Heart left ventricle (tissue), 16 donors: ENCODE measurements at regions of chrX and their contacts with region 1.

Region 1: GRCh38 chrX:101287402-101287801 is 3.7 kb downstream of the TAF7L start:
- DNase-seq: no peak
- ATAC-seq: no peak
- H3K4me3 ChIP-seq: no peak overlapping the region
- H3K27ac ChIP-seq: no peak overlapping the region
- H3K4me1 ChIP-seq: no peaks in the 10 kb centered on the region
- H3K27me3 ChIP-seq: peaks cover 0 to 24% (median 7%) of the 10 kb centered on the region in 9 donors
- CTCF ChIP-seq: peak; percentile 20 to 57 (median 48)
- POLR2A ChIP-seq: no peak

Region 2: DNA sequence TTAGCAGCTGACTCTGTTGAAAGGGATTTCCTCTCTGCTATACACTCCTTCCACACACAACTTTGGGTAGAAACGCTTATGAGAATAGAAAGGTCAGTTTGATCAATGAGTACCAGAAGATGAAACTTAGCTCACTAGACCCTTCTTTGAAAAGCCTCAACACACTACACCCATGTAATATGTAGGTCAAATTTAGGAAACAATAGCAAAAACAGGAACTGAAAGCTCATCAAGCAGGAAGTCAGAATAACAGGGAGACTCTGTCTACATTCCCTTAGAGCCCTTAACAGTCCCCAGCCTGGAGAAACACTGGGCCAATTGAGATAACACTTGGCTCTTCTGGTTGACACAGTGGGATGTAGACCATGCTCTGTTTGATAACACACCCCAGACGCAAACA is 612.7 kb before region 1 on chrX:
- intact Hi-C with region 1: loop called in 1 of 10 experiments (anchors 10 kb)
- DNase-seq: no peak
- ATAC-seq: no peak
- H3K4me3 ChIP-seq: no peak overlapping the region
- H3K27ac ChIP-seq: no peak overlapping the region
- H3K4me1 ChIP-seq: peaks cover 0 to 11% (median 0%) of the 10 kb centered on the region in 12 donors
- H3K27me3 ChIP-seq: peaks cover 0 to 43% (median 0%) of the 10 kb centered on the region in 9 donors
- CTCF ChIP-seq: no peak
- POLR2A ChIP-seq: no peak

Region 3: DNA sequence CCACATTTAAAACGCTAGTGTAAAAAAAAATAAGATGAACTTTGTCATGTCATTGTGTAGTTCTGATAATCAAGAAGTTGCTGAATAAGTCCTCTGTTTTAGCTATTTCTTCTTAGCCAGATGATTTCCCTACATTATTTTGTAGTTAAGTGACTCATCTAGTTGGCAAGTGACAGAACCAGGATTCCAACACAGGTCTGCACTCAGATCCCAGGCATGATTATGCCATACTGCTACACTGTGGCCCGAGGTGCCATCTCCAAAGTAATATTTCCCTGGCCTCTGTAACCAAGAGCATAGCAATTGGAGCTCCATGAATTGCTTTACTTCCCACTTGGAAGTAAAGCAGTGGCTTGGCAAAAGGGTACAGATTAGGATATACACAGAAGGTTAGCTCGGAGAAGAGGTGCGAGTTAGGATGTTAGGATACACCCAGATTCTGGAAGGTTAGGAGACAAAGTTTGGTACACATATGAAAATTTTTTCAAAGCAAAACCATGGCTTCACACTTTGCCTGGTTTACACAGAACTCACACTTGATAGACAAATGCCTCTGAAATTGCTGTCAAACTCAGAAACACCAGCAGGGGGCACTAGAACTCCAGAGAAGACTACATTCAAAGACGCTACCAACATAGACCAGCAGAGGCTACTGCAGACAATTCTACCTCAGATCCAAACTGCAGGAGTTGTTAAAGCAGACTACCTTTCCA is 602.0 kb before region 1 on chrX:
- intact Hi-C with region 1: loop called in 6 of 10 experiments (anchors 5 to 10 kb)
- DNase-seq: peak in 3 of 5 donors; percentile 31 to 48 (median 38)
- ATAC-seq: peak; percentile 55 to 86 (median 72)
- H3K4me3 ChIP-seq: no peak overlapping the region
- H3K27ac ChIP-seq: no peak overlapping the region
- H3K4me1 ChIP-seq: no peaks in the 10 kb centered on the region
- H3K27me3 ChIP-seq: peaks cover 0 to 25% (median 0%) of the 10 kb centered on the region in 9 donors
- CTCF ChIP-seq: peak; percentile 55 to 86 (median 70)
- POLR2A ChIP-seq: no peak

Region 4: DNA sequence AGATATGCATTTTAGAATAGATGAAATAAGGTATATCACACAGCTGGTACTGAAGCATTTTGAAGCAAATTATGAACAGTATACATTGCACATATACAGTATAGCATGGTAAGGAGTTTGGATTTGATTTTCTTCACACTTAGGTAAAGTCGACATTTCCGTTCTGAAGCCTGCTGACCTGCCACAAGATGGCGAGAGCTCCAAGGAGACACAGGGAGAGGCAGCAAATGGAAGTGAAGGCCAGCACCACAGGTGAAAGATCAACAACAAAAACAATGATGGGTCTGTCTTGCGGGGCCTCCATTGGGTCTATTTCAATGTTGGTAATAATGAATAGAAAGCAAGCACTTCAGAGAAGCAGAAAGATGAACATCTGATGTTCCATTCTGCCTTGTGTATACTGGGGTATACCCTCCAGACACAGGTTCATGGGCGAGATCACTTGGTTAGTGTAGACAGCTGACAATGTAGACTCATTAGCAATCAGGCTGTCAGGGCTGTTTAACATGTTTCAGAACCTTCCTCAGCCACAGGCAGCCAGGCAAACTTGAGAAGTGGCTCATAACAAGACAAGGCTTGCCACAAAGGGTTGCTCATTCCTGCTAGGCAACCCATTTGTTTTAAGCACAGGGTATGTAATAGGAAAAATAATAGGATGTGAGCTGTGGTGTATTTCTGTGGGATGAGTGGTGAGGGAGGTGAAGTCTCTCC is 391.9 kb before region 1 on chrX:
- intact Hi-C with region 1: loop called in 5 of 10 experiments (anchors 5 to 10 kb)
- DNase-seq: peak in 1 of 5 donors; percentile 5
- ATAC-seq: no peak
- H3K4me3 ChIP-seq: no peak overlapping the region
- H3K27ac ChIP-seq: no peak overlapping the region
- H3K4me1 ChIP-seq: no peaks in the 10 kb centered on the region
- H3K27me3 ChIP-seq: peaks cover 0 to 17% (median 0%) of the 10 kb centered on the region in 9 donors
- CTCF ChIP-seq: peak in 10 of 12 donors; percentile 12 to 39 (median 26)
- POLR2A ChIP-seq: no peak